K562 (cell line): ENCODE measurements at regions of chr3 and their contacts with region 1.

Region 1: DNA sequence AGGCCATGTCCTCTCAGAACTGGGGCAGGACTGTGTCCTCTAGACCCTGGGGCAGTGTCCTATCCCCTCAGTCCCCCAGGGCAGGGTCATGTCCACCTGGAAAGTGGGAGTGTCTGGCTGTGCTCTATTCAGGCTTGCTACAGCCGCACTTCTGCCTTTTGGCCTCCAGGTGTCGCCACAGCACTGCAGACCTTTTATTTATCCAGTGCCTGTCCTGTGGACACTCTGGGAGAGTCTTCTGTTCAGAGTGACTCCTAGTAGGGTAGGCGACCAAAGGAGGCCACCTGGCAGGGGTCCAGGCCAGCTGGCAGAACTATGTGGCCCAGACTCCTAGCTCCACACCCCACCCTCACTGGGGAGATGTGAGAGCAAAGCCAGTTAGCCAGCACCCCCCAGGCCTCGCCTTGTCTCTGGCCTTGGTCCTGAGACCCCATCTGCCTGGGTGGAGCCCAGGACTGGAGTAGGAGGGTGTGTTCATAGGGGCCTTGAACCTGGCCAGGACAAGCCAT is 3.9 kb downstream of the TMIE start:
- DNase-seq: peak; percentile 77 to 85 (median 82)
- ATAC-seq: peak; percentile 95
- H3K4me3 ChIP-seq: no peak overlapping the region
- H3K27ac ChIP-seq: no peak overlapping the region
- H3K4me1 ChIP-seq: peaks cover 0 to 8% of the 10 kb centered on the region in 2 experiments; a peak in 2 of 5 replicates
- H3K27me3 ChIP-seq: peaks cover 4 to 54% of the 10 kb centered on the region in 2 experiments; a peak in 4 of 5 replicates
- CTCF ChIP-seq: peak; percentile 92 to 99 (median 97)
- EP300 ChIP-seq: no peak
- POLR2A ChIP-seq: no peak
- RAD21 ChIP-seq: peak; percentile 94 to 97

Region 2: GRCh38 chr3:46733026-46733800 is 28.1 kb after region 1 on chr3:
- CTCF ChIA-PET with region 1: no interaction called
- POLR2A ChIA-PET with region 1: no interaction called
- in situ Hi-C with region 1: no loop called
- intact Hi-C with region 1: no loop called
- DNase-seq: peak in 1 of 4 experiments; percentile 24
- ATAC-seq: peak; percentile 75
- H3K4me3 ChIP-seq: no peak overlapping the region
- H3K27ac ChIP-seq: no peak overlapping the region
- H3K4me1 ChIP-seq: no peaks in the 10 kb centered on the region
- H3K27me3 ChIP-seq: peaks cover 17 to 54% of the 10 kb centered on the region in 2 experiments
- CTCF ChIP-seq: peak; percentile 39 to 62 (median 54); a peak in 5 of 6 replicates
- EP300 ChIP-seq: no peak
- POLR2A ChIP-seq: no peak
- RAD21 ChIP-seq: peak in 1 of 2 experiments; percentile 64; a peak in 2 of 4 replicates

Region 3: GRCh38 chr3:46845791-46846623 is 140.9 kb after region 1 on chr3:
- CTCF ChIA-PET with region 1: no interaction called
- POLR2A ChIA-PET with region 1: no interaction called
- in situ Hi-C with region 1: no loop called
- intact Hi-C with region 1: loop called (anchors 1 kb)
- DNase-seq: peak; percentile 67 to 94 (median 86)
- ATAC-seq: peak; percentile 92
- H3K4me3 ChIP-seq: peak overlapping the region; percentile 21; the same call in 1 of the 2 replicates
- H3K27ac ChIP-seq: no peak overlapping the region
- H3K4me1 ChIP-seq: peaks cover 11 to 17% of the 10 kb centered on the region in 2 experiments
- H3K27me3 ChIP-seq: peaks cover 5 to 38% of the 10 kb centered on the region in 2 experiments; a peak in 4 of 5 replicates
- CTCF ChIP-seq: peak; percentile 47 to 57 (median 52); a peak in 4 of 6 replicates
- EP300 ChIP-seq: no peak
- POLR2A ChIP-seq: no peak
- RAD21 ChIP-seq: peak; percentile 11 to 39; a peak in 2 of 4 replicates

Region 4: DNA sequence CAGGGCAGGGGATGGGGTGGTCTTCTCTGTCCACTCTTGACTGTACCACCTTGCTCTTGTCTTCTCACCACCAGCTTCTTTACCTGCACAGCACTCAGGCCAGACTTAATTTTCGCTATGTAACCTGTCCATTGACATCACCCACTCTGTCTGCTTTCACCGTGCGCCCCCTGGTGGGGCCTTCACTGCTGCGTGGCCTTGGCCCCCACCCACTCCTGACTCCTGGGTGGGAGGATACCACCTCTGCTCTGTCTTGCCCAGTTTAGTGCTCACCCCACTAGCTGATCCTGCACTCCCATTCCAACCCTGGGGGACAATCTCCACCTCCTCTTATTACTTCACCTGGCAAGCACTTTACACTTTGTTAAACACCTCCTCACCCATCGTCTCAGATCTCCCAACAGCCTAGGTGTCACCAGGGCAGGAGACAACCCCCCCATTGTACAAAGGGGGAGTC is 190.2 kb after region 1 on chr3:
- CTCF ChIA-PET with region 1: interaction called, 27 read pairs
- POLR2A ChIA-PET with region 1: no interaction called
- in situ Hi-C with region 1: no loop called
- intact Hi-C with region 1: loop called (anchors 1 kb)
- DNase-seq: peak; percentile 84 to 86 (median 85)
- ATAC-seq: peak; percentile 92
- H3K4me3 ChIP-seq: no peak overlapping the region
- H3K27ac ChIP-seq: no peak overlapping the region
- H3K4me1 ChIP-seq: peaks cover 0 to 37% of the 10 kb centered on the region in 2 experiments; a peak in 3 of 5 replicates
- H3K27me3 ChIP-seq: peaks cover 20 to 62% of the 10 kb centered on the region in 2 experiments; a peak in 4 of 5 replicates
- CTCF ChIP-seq: peak; percentile 91 to 99 (median 93)
- EP300 ChIP-seq: no peak
- POLR2A ChIP-seq: no peak
- RAD21 ChIP-seq: peak; percentile 79 to 97

Region 5: GRCh38 chr3:46909535-46910442 is 204.7 kb after region 1 on chr3:
- CTCF ChIA-PET with region 1: interaction called, 10 read pairs
- POLR2A ChIA-PET with region 1: interaction called, 4 read pairs
- in situ Hi-C with region 1: no loop called
- intact Hi-C with region 1: loop called (anchors 1 kb)
- DNase-seq: peak; percentile 90 to 93 (median 90)
- ATAC-seq: peak; percentile 95
- H3K4me3 ChIP-seq: no peak overlapping the region
- H3K27ac ChIP-seq: no peak overlapping the region
- H3K4me1 ChIP-seq: peaks cover 0 to 22% of the 10 kb centered on the region in 2 experiments; a peak in 3 of 5 replicates
- H3K27me3 ChIP-seq: peaks cover 0 to 6% of the 10 kb centered on the region in 2 experiments; a peak in 2 of 5 replicates
- CTCF ChIP-seq: peak; percentile 96 to 98 (median 98)
- EP300 ChIP-seq: no peak
- POLR2A ChIP-seq: peak; percentile 10; the same call in 1 of the 2 replicates
- RAD21 ChIP-seq: peak; percentile 90 to 95

Region 6: DNA sequence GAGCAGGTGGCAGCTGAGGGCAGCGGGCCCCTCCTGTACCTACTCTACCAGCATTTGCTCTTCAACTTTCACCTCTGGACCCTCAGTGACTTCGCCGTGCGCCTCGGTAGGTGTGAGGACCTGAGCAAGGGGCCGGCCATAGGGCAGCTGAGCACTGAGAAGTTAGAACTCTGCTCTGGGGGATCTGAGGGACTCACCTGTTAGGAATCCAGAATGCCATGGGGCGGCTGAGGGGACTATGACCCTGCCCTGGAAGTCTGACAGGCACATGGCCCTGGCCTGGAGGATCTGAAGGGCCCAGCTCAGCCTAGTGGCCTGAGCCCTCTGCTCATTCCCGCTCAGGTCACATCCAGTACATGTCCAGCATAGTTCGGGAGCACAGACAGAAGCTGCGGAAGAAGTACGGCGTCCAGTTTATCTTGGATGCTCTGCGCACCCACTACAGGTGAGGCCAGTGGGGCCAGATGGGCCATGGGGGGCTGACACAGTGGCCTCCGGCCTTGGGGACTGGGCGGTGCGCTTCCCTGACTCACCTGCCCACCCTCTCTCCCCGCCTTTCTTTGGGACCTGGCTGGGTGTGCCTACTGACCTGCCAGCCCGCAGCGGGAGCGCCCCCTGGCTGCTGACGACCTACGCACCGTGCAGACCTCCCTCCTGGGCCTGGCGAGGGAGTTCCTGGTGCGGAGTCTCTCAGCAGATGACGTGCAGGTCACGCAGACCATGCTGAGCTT is 293.2 kb after region 1 on chr3:
- CTCF ChIA-PET with region 1: no interaction called
- POLR2A ChIA-PET with region 1: no interaction called
- in situ Hi-C with region 1: no loop called
- intact Hi-C with region 1: loop called (anchors 10 kb)
- DNase-seq: peak; percentile 84 to 88 (median 86)
- ATAC-seq: peak; percentile 92
- H3K4me3 ChIP-seq: no peak overlapping the region
- H3K27ac ChIP-seq: no peak overlapping the region
- H3K4me1 ChIP-seq: peaks cover 0 to 64% of the 10 kb centered on the region in 2 experiments; a peak in 2 of 5 replicates
- H3K27me3 ChIP-seq: no peaks in the 10 kb centered on the region
- CTCF ChIP-seq: peak; percentile 91 to 96 (median 95)
- EP300 ChIP-seq: no peak
- POLR2A ChIP-seq: no peak
- RAD21 ChIP-seq: peak; percentile 93 to 99

Region 7: DNA sequence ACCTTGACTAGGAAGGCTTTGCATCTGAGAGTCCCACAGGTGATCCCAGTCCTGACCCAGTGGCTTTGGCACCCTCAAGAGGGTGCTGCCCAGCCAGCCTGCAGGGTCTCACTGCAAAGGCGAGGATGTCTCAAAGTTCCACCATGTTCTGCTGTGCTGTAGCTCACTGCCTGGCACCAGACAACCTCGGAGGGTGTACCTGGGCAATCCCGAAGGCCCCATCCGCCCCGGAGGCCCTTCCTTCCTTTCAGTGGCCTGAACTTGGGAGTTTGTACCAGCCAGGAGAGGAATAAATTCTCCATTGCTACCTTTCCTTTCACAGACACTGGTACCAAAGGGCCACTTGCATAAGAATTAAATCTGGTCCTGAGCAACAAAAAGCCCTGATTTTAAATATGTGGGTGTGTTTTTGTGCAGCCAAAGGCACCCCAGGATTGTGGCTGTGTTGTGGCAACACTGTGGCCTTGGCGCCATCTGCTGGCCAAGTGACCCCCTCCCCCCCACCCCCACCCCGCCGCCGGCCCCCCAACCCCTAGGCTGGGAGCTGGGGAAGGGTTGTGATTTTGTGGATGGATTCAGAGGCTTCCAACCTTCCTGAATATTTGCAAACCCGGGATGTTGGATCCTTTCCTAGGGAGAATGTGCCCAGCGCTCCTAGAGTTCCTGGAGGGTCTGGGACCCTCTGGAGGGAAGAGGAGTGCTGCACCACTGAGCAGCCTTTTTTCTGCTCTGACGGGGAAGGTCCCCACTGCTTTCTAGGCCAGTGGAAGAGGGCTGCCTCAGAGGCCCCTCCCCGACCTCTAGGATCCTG is 666.0 kb after region 1 on chr3:
- CTCF ChIA-PET with region 1: interaction called, 9 read pairs
- POLR2A ChIA-PET with region 1: no interaction called
- in situ Hi-C with region 1: no loop called
- intact Hi-C with region 1: loop called (anchors 10 kb)
- DNase-seq: peak; percentile 59 to 85 (median 84)
- ATAC-seq: peak; percentile 84
- H3K4me3 ChIP-seq: no peak overlapping the region
- H3K27ac ChIP-seq: no peak overlapping the region
- H3K4me1 ChIP-seq: 0 out of 5 replicates have a peak, but pooled peaks cover 0 to 3% of the 10 kb centered on the region in 2 experiments
- H3K27me3 ChIP-seq: no peaks in the 10 kb centered on the region
- CTCF ChIP-seq: peak; percentile 40 to 61 (median 57); a peak in 4 of 6 replicates
- EP300 ChIP-seq: no peak
- POLR2A ChIP-seq: no peak
- RAD21 ChIP-seq: peak; percentile 42 to 63